ENCODE measurements at regions of chr6 and their contacts with region 1.

Region 1: DNA sequence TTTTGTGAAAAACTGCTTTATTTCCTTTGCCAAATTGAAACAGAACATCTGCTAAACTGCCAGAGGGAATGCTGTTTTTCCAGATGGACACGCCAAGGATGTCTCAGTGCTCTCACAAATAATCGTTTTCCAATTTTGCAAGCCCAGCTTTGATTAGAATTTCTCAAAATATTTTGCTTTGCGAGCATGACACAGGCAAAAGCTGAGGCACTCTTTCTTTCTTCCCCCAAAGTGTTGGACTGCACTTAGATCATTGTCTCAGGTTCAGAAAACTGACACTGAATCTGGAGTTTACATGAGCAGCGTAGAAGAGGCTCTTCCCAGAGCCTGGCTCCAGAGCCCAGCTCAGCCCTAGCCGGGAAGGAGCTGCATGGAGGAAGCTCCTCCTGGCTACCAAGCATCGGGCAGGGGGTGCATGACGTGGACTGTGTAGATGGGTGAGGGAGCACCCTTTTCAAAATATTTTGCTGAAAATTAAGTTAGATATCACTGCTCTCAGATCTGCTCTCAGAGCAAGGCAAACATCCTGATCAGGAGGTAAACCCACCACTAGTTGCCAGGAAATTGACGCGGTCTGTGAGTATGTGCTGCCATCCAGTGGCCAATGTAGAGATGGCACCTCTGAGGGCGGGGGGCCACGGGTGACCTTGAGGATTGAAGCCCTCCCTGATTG is 107.5 kb downstream of the SLC22A3 start:
- DNase-seq: peak; percentile 5
- ATAC-seq: peak; percentile 90
- H3K4me3 ChIP-seq: no peak overlapping the region
- H3K27ac ChIP-seq: no peak overlapping the region
- H3K4me1 ChIP-seq: no peaks in the 10 kb centered on the region
- H3K27me3 ChIP-seq: no peaks in the 10 kb centered on the region; a peak in 1 of 4 replicates
- CTCF ChIP-seq: peak; percentile 85 to 93 (median 89)
- EP300 ChIP-seq: no peak
- POLR2A ChIP-seq: no peak
- RAD21 ChIP-seq: peak; percentile 98

Region 2: DNA sequence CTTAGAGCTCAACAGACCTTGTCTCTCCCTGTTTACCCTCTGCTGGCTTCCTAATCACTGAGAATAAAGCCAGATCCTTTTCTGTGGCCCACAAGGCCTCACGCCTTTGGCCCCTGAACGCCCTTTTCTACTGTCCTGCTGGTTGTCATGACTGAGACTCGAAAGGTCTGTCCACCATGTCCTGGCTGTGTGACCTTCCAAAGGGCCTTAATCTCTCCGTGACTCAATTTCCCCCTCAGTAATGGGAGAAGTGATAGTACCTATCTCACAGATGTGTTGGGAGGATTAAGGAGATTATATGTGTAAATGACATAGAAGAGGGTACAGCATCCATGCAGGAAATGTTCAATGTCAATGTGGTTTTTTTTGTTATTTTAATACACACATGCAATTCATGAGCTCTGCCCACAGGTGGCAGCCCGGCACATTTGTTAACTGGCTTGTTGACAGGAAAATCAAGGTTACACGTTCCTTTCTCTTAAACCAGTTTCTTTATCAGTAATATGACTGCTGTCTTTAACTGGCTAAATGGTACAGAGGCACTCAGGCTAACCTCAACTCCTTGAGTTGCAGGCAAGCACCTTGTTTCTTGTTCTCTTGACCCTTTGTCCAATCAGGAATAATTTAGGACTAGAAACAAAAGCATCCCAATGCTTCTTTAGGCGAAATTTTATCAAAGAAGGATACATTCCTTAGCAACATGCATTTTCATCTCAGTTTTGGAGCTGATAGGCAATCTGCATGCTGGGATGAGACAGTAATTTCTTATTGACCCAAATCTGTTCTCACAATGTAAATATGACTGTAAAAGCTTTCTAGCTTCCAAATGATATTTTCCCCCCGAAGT is 317.5 kb before region 1 on chr6:
- CTCF ChIA-PET with region 1: interaction called, 49 read pairs
- POLR2A ChIA-PET with region 1: no interaction called
- RAD21 ChIA-PET with region 1: interaction called, 16 read pairs
- SMC1A ChIA-PET with region 1: interaction called, 23 read pairs
- in situ Hi-C with region 1: loop called (anchors 5 kb)
- intact Hi-C with region 1: loop called (anchors 1 kb)
- DNase-seq: peak; percentile 23
- ATAC-seq: peak; percentile 72
- H3K4me3 ChIP-seq: no peak overlapping the region
- H3K27ac ChIP-seq: no peak overlapping the region
- H3K4me1 ChIP-seq: no peaks in the 10 kb centered on the region
- H3K27me3 ChIP-seq: no peaks in the 10 kb centered on the region; a peak in 1 of 4 replicates
- CTCF ChIP-seq: peak; percentile 67 to 85 (median 77)
- EP300 ChIP-seq: no peak
- POLR2A ChIP-seq: no peak
- RAD21 ChIP-seq: peak; percentile 73

Region 3: GRCh38 chr6:160221423-160221822 is 234.3 kb before region 1 on chr6:
- CTCF ChIA-PET with region 1: interaction called, 4 read pairs
- POLR2A ChIA-PET with region 1: no interaction called
- RAD21 ChIA-PET with region 1: interaction called, 9 read pairs
- SMC1A ChIA-PET with region 1: interaction called, 4 read pairs
- in situ Hi-C with region 1: no loop called
- intact Hi-C with region 1: loop called (anchors 5 kb)
- DNase-seq: peak; percentile 12
- ATAC-seq: peak; percentile 61
- H3K4me3 ChIP-seq: no peak overlapping the region
- H3K27ac ChIP-seq: no peak overlapping the region
- H3K4me1 ChIP-seq: no peaks in the 10 kb centered on the region
- H3K27me3 ChIP-seq: peaks cover 0 to 2% of the 10 kb centered on the region in 2 experiments; a peak in 1 of 4 replicates
- CTCF ChIP-seq: no peak; a peak in 1 of 6 replicates
- EP300 ChIP-seq: no peak
- POLR2A ChIP-seq: no peak
- RAD21 ChIP-seq: no peak